Pancreas (tissue), 10 donors: ENCODE measurements at regions of chr19 and their contacts with region 1.

Region 1: GRCh38 chr19:49506575-49507105 is 5.8 kb upstream of the FCGRT start:
- DNase-seq: peak; percentile 61 to 86 (median 78)
- ATAC-seq: peak; percentile 71 to 93 (median 83)
- H3K4me3 ChIP-seq: no peak overlapping the region
- H3K27ac ChIP-seq: no peak overlapping the region
- H3K4me1 ChIP-seq: no peaks in the 10 kb centered on the region
- H3K27me3 ChIP-seq: no peaks in the 10 kb centered on the region
- CTCF ChIP-seq: peak; percentile 53 to 64 (median 62)

Region 2: DNA sequence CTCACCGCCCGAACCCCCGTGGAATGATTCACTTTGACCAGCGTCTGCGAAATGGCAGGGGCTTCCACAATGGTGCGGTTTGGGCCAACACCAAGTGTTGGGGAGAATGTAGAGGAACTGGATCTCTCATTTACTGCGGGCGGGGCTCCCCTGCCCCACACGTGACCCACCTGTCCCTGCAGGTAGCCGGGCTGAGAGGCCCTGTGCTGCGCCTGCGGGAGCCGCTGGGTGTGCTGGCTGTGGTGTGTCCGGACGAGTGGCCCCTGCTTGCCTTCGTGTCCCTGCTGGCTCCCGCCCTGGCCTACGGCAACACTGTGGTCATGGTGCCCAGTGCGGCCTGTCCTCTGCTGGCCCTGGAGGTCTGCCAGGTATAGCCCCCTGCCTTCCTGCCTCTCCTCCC is 38.4 kb before region 1 on chr19:
- intact Hi-C with region 1: no loop called
- DNase-seq: no peak
- ATAC-seq: peak in 1 of 4 donors; percentile 31
- H3K4me3 ChIP-seq: no peak overlapping the region
- H3K27ac ChIP-seq: no peak overlapping the region
- H3K4me1 ChIP-seq: no peaks in the 10 kb centered on the region
- H3K27me3 ChIP-seq: no peaks in the 10 kb centered on the region
- CTCF ChIP-seq: no peak

Region 3: DNA sequence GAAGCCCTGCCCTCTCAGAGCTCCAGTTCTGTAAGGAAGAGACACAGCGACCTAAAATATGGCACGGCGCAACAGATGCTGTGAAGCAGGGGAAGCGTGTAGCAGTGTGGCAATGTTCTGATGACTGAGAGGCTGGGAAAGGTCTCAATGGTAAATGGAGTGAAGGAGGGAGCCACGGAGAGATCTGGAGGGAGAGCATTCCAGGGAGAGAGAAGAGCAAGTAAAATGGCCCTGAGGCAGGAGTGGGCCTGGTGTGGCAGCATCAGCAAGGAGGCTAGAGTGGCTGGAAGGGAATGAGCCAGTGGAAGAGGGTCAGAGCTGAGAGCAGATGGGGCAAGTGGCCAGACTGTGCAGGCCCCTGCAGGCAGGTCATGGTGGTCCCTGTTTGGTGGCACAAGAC is 37.5 kb after region 1 on chr19:
- intact Hi-C with region 1: loop called in 2 of 3 experiments (anchors 5 kb)
- DNase-seq: no peak
- ATAC-seq: no peak
- H3K4me3 ChIP-seq: no peak overlapping the region
- H3K27ac ChIP-seq: no peak overlapping the region
- H3K4me1 ChIP-seq: no peaks in the 10 kb centered on the region
- H3K27me3 ChIP-seq: no peaks in the 10 kb centered on the region
- CTCF ChIP-seq: no peak